ENCODE measurements at regions of chrX and their contacts with region 1.

Region 1: DNA sequence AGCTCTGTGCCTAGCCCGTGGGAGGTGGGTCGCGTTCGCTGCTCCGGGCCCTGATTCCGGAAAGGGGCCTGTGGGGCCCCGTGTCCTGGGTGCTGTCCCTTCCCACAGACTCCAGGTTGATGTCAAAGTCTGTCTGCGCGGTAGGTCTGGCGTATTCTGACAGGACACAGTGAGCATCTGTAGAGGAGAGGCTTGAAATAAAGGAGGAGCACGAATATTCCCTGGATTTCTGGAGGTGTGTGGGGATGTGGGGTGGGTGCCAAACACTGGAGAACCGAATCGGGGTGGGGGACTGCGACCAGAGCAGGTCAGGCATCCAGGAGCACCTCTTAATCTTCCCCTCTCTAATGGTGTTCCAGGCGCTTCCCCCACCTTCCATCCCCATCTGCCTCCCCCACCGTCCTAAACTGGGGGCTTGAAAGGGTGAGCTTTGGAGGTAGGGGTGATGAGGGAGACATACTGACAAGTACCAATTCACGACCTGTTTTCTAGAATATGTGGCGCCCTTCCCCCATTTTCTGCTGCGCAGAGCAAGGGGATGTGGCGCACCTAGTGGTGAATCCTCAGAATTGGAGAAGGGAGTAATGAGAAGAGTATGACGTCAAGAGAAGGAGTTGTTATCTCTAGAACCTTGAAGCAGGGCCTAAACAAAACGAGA is 877 bp downstream of the GPRASP1 start:
- DNase-seq: peak; percentile 26 to 83 (median 62)
- ATAC-seq: peak; percentile 78
- H3K4me3 ChIP-seq: peak overlapping the region; percentile 73 to 78
- H3K4me3 Mint-ChIP-seq: peak overlapping the region; percentile 99
- H3K27ac ChIP-seq: peak overlapping the region; percentile 70 to 78
- H3K27ac Mint-ChIP-seq: peak overlapping the region; percentile 95
- H3K4me1 ChIP-seq: peaks cover 13% of the 10 kb centered on the region
- H3K4me1 Mint-ChIP-seq: peaks cover 42% of the 10 kb centered on the region
- H3K27me3 ChIP-seq: no peaks in the 10 kb centered on the region
- H3K27me3 Mint-ChIP-seq: no peaks in the 10 kb centered on the region
- CTCF ChIP-seq: peak; percentile 49

Region 2: DNA sequence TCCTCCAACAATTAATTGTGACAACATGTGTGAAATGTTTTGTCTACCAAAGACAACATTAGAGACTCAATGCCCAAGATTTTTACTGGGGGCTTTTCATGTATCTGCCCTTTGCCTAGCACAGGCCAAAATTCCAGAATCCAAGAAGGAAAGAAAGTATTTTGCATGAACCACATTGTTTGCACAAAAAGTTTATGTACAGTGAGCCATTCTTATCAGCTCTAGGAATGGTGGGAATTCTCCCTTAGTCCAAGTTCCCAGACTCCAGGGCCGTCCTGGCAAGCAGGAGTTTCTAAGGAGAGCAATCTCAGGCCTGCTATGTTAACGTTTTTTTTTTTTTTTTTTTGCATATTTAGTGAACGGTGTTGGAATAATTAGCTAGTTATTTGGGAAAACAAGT is 20.7 kb after region 1 on chrX:
- CTCF ChIA-PET with region 1: no interaction called
- POLR2A ChIA-PET with region 1: interaction called, 3 read pairs
- intact Hi-C with region 1: loop called in 1 of 2 experiments (anchors 2 kb)
- DNase-seq: no peak
- ATAC-seq: no peak
- H3K4me3 ChIP-seq: no peak overlapping the region
- H3K4me3 Mint-ChIP-seq: no peak overlapping the region
- H3K27ac ChIP-seq: no peak overlapping the region
- H3K27ac Mint-ChIP-seq: no peak overlapping the region
- H3K4me1 ChIP-seq: no peaks in the 10 kb centered on the region
- H3K4me1 Mint-ChIP-seq: peaks cover 23% of the 10 kb centered on the region
- H3K27me3 ChIP-seq: no peaks in the 10 kb centered on the region
- H3K27me3 Mint-ChIP-seq: no peaks in the 10 kb centered on the region
- CTCF ChIP-seq: no peak